CD4-positive, alpha-beta T cell (primary cell): ENCODE measurements at regions of chr2 and their contacts with region 1.

Region 1: GRCh38 chr2:113080134-113080533 is 12.4 kb downstream of the IL1F10 start:
- DNase-seq: peak in 11 of 14 experiments; percentile 23 to 64 (median 30)
- ATAC-seq: peak; percentile 77
- H3K4me3 ChIP-seq: no peak overlapping the region
- H3K4me3 Mint-ChIP-seq: no peak overlapping the region
- H3K27ac ChIP-seq: no peak overlapping the region
- H3K27ac Mint-ChIP-seq: no peak overlapping the region
- H3K4me1 ChIP-seq: peaks cover 1% of the 10 kb centered on the region
- H3K4me1 Mint-ChIP-seq: peaks cover 4% of the 10 kb centered on the region
- H3K27me3 ChIP-seq: no peaks in the 10 kb centered on the region
- H3K27me3 Mint-ChIP-seq: no peaks in the 10 kb centered on the region
- CTCF ChIP-seq: peak; percentile 60

Region 2: DNA sequence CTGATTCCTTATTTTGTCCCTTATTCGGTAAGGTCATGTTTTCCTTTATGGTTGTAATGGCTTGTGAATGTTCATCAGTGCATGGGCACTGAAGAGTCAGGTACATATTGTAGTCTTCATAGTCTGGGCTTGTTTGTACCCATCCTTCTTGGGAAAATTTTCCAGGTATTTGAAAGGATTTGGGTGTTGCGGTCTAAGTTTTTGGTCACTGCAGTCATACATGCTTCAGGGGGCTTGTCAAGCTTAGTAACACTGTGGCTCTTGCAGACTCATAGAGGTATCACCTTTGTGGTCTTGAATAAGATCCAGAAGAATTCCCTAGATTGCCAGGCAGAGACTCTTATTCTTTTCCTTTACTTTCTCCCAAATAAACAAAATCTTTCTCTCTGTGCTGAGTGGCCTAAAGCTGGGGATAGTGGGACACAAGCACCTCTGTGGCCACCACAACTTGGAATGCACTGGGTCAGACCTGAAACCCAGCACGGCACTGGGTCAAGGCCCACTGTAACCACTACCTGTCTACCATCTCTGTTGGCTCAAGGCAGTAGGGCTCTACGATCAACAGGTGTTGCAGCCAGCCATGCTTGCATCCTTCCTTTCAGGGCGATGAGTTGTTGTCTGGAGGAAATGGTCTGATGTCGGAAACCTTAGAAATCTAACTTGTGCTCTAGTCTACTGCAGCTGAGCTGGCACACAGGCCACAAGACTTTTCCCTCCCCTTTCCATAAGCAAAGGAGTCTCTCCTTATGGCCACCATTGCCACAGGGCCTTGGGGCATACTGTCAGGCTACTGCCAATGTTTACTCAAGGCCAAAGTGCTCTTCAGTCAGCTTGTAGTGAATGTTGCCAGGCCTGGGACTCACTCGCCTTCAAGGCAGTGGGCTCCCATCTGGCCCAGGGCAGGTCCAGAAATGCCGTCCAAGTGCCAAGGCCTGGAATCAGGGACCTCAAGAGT is 68.7 kb after region 1 on chr2:
- CTCF ChIA-PET with region 1: no interaction called
- POLR2A ChIA-PET with region 1: no interaction called
- intact Hi-C with region 1: no loop called
- DNase-seq: no peak
- ATAC-seq: no peak
- H3K4me3 ChIP-seq: no peak overlapping the region
- H3K4me3 Mint-ChIP-seq: no peak overlapping the region
- H3K27ac ChIP-seq: no peak overlapping the region
- H3K27ac Mint-ChIP-seq: no peak overlapping the region
- H3K4me1 ChIP-seq: no peaks in the 10 kb centered on the region
- H3K4me1 Mint-ChIP-seq: no peaks in the 10 kb centered on the region
- H3K27me3 ChIP-seq: no peaks in the 10 kb centered on the region
- H3K27me3 Mint-ChIP-seq: no peaks in the 10 kb centered on the region
- CTCF ChIP-seq: no peak

Region 3: DNA sequence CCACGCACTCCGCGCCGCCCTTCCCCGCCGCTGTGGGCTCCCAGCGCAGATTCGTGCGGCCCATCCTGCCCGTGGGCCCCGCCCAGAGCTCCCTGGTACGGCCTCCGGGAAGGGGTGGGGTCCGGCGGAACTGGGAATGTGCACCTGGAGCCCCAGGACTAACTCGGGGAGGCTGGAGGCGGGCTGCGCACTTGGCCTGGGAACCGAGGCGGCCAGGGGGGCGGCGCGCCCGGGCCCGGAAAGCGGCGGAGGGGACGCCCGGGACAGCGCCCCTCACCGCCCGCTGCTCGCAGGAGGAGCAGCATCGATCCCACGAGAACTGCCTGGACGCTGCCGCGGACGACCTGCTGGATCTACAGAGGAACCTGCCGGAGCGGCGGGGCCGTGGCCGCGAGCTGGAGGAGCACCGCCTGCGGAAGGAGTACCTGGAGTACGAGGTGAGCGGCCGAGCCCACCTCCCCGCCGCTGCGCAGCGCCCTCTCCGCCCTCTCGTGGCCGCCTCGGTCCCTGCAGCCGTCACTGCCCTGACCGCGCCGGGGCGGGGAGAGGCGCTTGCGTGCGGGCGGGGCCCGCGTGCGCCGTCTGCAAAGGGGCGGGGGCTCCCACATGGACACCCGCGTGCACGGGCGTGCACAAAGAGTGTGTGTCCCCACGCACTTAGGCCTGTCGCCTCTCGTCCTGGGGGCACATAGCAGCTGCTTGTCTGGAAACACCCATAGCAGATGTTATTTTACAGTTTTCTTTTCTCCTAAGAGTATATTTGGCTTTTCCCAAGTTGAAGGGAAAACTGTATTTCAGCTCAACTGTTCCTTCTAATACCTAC is 118.9 kb after region 1 on chr2:
- CTCF ChIA-PET with region 1: no interaction called
- POLR2A ChIA-PET with region 1: no interaction called
- intact Hi-C with region 1: loop called in 1 of 2 experiments (anchors 5 kb)
- DNase-seq: peak; percentile 53 to 87 (median 75)
- ATAC-seq: peak; percentile 71
- H3K4me3 ChIP-seq: no peak overlapping the region
- H3K4me3 Mint-ChIP-seq: no peak overlapping the region
- H3K27ac ChIP-seq: peak overlapping the region in 1 of 2 donors; percentile 5
- H3K27ac Mint-ChIP-seq: peak overlapping the region; percentile 12
- H3K4me1 ChIP-seq: peaks cover 9% of the 10 kb centered on the region
- H3K4me1 Mint-ChIP-seq: peaks cover 8% of the 10 kb centered on the region
- H3K27me3 ChIP-seq: no peaks in the 10 kb centered on the region
- H3K27me3 Mint-ChIP-seq: no peaks in the 10 kb centered on the region
- CTCF ChIP-seq: peak; percentile 91